ENCODE measurements at regions of chr12 and their contacts with region 1.

Region 1: GRCh38 chr12:117032593-117033381 is 66.4 kb downstream of the TESC start:
- DNase-seq: peak; percentile 41 to 67 (median 47)
- H3K4me3 ChIP-seq: no peak overlapping the region
- H3K27ac ChIP-seq: peak overlapping the region in 1 of 2 donors; percentile 47
- H3K4me1 ChIP-seq: peaks cover 14% of the 10 kb centered on the region
- H3K27me3 ChIP-seq: no peaks in the 10 kb centered on the region
- CTCF ChIP-seq: no peak
- EP300 ChIP-seq: no peak
- POLR2A ChIP-seq: no peak

Region 2: GRCh38 chr12:115140981-115141655 is 1891.7 kb before region 1 on chr12:
- intact Hi-C with region 1: no loop called
- DNase-seq: no peak
- H3K4me3 ChIP-seq: no peak overlapping the region
- H3K27ac ChIP-seq: no peak overlapping the region
- H3K4me1 ChIP-seq: no peaks in the 10 kb centered on the region
- H3K27me3 ChIP-seq: no peaks in the 10 kb centered on the region
- CTCF ChIP-seq: no peak
- EP300 ChIP-seq: no peak
- POLR2A ChIP-seq: no peak

Region 3: GRCh38 chr12:117143008-117143532 is 110.3 kb after region 1 on chr12:
- intact Hi-C with region 1: loop called in 1 of 4 experiments (anchors 10 kb)
- DNase-seq: no peak
- H3K4me3 ChIP-seq: no peak overlapping the region
- H3K27ac ChIP-seq: no peak overlapping the region
- H3K4me1 ChIP-seq: peaks cover 5% of the 10 kb centered on the region
- H3K27me3 ChIP-seq: no peaks in the 10 kb centered on the region
- CTCF ChIP-seq: no peak
- EP300 ChIP-seq: no peak
- POLR2A ChIP-seq: no peak

Measured in ovary (tissue), 10 donors.